Activated CD4-positive, alpha-beta memory T cell treated with anti-CD3 and anti-CD28 coated beads for 36 hours (primary cell): ENCODE measurements at regions of chr14 and their contacts with region 1.

Region 1: GRCh38 chr14:25247602-25248001 is 197.7 kb upstream of the STXBP6 start:
- DNase-seq: no peak
- H3K4me3 Mint-ChIP-seq: no peak overlapping the region
- H3K27ac Mint-ChIP-seq: no peak overlapping the region
- H3K4me1 Mint-ChIP-seq: no peaks in the 10 kb centered on the region
- H3K27me3 Mint-ChIP-seq: no peaks in the 10 kb centered on the region

Region 2: DNA sequence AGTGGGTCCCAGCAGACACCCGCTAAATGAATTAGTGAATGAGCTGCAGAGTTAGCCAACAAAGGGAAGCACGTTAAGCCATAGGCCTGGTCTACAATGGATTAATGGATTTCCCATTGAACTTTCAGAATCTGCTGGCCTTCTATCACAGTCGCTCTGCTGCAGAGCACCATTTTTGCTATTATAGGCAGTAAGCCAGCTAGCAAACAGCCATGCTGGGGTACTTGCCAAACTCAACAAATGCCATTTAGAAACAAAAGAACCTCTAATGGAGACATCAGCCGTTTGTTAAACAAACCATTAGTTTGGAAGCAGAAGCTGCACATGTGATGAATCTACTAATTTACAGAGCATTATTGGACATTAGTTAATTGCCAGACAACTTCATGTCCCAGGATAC is 16.6 kb before region 1 on chr14:
- CTCF ChIA-PET with region 1: no interaction called
- POLR2A ChIA-PET with region 1: no interaction called
- intact Hi-C with region 1: loop called (anchors 2 kb)
- DNase-seq: no peak
- H3K4me3 Mint-ChIP-seq: no peak overlapping the region
- H3K27ac Mint-ChIP-seq: no peak overlapping the region
- H3K4me1 Mint-ChIP-seq: no peaks in the 10 kb centered on the region
- H3K27me3 Mint-ChIP-seq: no peaks in the 10 kb centered on the region